Activated T-helper 2 cell treated with anti-CD3 and anti-CD28 coated beads, Interferon-gamma antibody, Interleukin-2, Interleukin-4, amounts not matched to agents 10 μg/mL and 5 μg/mL and 100 μg/mL, durations not matched to agents 14 hours and 24 hours and 36 hours (primary cell): ENCODE measurements at regions of chr6 and their contacts with region 1.

Region 1: GRCh38 chr6:35146453-35146852 is 5.3 kb upstream of the TCP11 start:
- DNase-seq: no peak
- H3K4me3 Mint-ChIP-seq: no peak overlapping the region
- H3K27ac Mint-ChIP-seq: no peak overlapping the region
- H3K4me1 Mint-ChIP-seq: peaks cover 27% of the 10 kb centered on the region
- H3K27me3 Mint-ChIP-seq: peaks cover 8% of the 10 kb centered on the region

Region 2: GRCh38 chr6:35202066-35202546 is 55.7 kb after region 1 on chr6:
- intact Hi-C with region 1: loop called (anchors 1 kb)
- DNase-seq: no peak
- H3K4me3 Mint-ChIP-seq: no peak overlapping the region
- H3K27ac Mint-ChIP-seq: no peak overlapping the region
- H3K4me1 Mint-ChIP-seq: peaks cover 1% of the 10 kb centered on the region
- H3K27me3 Mint-ChIP-seq: peaks cover 47% of the 10 kb centered on the region

Region 3: DNA sequence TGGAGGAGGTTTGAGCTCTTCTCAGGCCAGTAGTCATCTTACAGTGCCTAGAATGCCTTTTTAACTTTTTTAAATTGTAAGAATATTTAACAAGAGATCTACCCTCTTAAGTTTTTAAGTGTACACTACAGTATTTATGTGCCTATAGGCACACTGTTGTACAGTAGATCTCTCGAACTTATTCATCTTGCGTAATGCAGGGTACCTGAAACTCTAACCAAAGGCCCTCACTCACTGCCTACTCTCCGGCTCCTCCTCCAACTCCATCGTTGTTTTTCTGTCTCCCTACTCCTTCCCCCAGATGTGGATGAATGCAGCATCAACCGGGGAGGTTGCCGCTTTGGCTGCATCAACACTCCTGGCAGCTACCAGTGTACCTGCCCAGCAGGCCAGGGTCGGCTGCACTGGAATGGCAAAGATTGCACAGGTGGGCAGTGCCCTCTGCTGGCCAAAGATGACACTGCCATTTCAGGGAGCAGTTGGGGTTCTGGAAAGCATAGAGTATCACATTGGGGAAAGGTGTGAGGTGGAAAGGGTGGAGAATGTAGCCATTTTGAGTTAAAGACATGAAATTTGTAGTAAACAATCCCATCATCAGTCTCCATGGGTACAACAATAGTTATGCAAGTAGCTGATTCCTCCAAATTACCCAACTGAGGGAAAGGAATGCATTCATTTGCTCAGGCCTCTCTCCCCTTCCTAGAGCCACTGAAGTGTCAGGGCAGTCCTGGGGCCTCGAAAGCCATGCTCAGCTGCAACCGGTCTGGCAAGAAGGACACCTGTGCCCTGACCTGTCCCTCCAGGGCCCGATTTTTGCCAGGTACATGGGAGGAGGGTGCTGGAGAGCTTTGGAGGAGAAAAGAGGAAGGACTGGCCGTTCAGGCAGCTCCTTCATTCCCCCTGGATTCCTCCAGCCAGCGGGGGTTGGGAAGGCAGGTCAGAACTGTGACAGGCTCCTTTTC is 94.7 kb after region 1 on chr6:
- intact Hi-C with region 1: loop called (anchors 2 kb)
- DNase-seq: peak; percentile 56
- H3K4me3 Mint-ChIP-seq: no peak overlapping the region
- H3K27ac Mint-ChIP-seq: no peak overlapping the region
- H3K4me1 Mint-ChIP-seq: no peaks in the 10 kb centered on the region
- H3K27me3 Mint-ChIP-seq: no peaks in the 10 kb centered on the region